Aorta (tissue), 5 donors: ENCODE measurements at regions of chr11 and their contacts with region 1.

Region 1: GRCh38 chr11:11584446-11584810 is 37.4 kb downstream of the GALNT18 start:
- DNase-seq: no peak
- ATAC-seq: peak; percentile 67
- H3K4me3 ChIP-seq: no peak overlapping the region
- H3K27ac ChIP-seq: peak overlapping the region; percentile 86 to 91
- H3K4me1 ChIP-seq: peaks cover 11 to 15% of the 10 kb centered on the region in 2 donors
- H3K27me3 ChIP-seq: no peaks in the 10 kb centered on the region

Region 2: GRCh38 chr11:11545285-11546275 is 38.8 kb before region 1 on chr11:
- intact Hi-C with region 1: no loop called
- DNase-seq: no peak
- ATAC-seq: no peak
- H3K4me3 ChIP-seq: no peak overlapping the region
- H3K27ac ChIP-seq: no peak overlapping the region
- H3K4me1 ChIP-seq: no peaks in the 10 kb centered on the region
- H3K27me3 ChIP-seq: no peaks in the 10 kb centered on the region

Region 3: DNA sequence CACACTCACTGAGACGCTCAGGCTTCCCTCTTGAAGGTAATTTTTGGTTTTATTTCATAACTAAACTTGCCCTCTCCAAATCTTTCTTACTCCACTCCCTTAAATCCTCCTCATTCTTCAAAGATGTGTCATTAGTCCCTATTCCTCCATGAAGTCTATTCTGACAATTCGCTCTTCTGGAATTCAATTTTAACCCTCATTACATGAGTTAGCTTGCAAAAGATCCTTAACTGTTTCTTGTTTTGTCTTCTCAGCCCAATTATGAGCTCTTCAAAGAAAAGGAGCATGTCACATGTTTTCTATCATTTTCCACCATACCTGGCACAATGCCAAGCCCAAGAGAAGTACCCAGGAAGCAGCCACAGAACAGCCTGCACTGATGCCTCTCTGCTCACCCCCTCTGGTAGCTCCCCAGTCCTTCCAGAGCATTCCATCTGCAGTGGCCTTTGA is 24.4 kb after region 1 on chr11:
- intact Hi-C with region 1: loop called in 1 of 2 experiments (anchors 1 kb)
- DNase-seq: no peak
- ATAC-seq: no peak
- H3K4me3 ChIP-seq: no peak overlapping the region
- H3K27ac ChIP-seq: peak overlapping the region in 1 of 2 donors; percentile 88
- H3K4me1 ChIP-seq: peaks cover 0 to 19% of the 10 kb centered on the region in 2 donors
- H3K27me3 ChIP-seq: no peaks in the 10 kb centered on the region